PC-9 (cell line): ENCODE measurements at regions of chr10 and their contacts with region 1.

Region 1: DNA sequence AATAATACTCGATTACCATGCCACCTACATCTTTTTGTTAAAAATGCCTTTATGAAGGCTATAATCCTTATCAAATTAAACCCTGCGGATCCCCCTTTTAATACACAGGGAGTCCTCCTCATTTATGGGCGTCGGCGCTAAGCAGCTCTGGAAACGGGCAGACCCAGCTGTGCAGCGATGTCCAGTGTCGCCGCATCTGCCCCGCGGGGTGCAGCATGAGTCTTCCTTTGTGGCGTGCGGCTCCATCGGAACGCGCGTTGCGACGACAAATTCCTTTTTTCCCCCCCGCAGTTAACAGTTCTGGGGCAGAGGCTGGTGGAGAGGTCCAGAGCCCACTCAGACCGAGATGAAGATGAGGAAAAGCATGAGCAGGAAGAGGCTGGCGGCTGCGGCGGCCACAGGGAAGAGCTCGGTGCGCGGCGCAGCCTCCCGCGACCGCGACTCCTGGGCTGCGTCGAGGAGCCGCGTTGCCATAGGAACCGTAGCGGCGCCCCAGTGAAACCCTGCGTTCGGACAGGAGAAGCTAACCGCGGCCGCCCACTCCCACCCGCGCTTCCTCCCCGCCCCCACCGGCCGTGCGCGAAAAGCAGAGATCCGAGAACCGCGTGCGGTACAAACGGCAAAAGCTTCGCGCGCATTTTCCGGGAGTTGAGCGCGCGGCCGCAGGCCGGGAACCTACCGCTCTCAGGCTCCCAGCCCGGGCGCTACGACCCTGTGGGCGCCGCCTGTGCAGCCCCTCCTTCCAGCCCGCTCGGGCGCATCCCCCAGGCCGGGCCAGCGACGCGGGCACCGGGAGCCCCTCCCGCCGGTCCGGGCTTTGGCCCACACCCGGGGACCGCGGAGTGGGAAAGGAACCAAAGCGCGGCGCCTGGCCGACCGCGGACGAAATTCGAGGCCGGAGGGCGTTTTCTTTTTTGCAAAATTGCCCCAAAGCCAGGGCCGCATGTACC is 130.6 kb downstream of the SPAG6 start:
- DNase-seq: no peak
- H3K4me3 ChIP-seq: no peak overlapping the region
- H3K27ac ChIP-seq: no peak overlapping the region
- H3K4me1 ChIP-seq: no peaks in the 10 kb centered on the region
- H3K27me3 ChIP-seq: no peaks in the 10 kb centered on the region
- CTCF ChIP-seq: no peak

Region 2: DNA sequence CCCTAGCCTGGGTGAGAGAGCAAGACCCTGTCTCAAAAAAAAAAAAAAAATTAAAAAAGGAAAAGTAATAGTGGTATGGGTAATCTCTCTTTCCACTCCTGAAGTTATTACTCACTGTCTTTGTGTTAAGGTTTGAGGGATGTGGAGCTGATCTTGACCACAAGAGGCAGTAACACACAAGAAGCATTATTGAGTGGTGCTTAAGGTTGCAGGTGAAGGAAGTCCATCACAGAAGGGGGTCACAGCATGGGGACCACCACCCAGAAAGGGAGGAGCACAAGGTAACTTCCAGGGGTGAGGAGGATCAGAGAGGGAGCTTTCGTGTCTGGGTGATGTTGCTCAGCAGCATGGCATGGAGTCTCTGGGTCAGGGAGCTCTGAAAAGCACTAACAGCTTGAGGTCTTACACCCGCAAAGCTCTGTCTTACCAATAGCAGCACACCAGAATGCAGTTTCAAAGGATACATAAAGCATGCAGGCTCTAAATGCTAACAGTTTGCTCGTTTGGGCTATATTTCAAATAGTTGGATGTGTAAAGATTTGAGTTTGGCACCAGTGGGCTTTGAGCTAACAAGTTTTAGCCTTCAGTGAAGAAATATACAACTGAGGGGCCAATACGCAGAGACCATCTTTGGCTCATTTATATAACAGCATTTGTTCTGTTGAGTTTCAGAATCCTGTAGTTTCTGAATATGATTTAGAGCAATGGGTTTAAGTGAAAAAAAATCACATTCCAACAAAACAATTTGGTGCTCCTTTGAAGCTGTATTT is 372.0 kb before region 1 on chr10:
- CTCF ChIA-PET with region 1: interaction called, 17 read pairs
- POLR2A ChIA-PET with region 1: no interaction called
- intact Hi-C with region 1: no loop called
- DNase-seq: no peak
- H3K4me3 ChIP-seq: no peak overlapping the region
- H3K27ac ChIP-seq: no peak overlapping the region
- H3K4me1 ChIP-seq: no peaks in the 10 kb centered on the region
- H3K27me3 ChIP-seq: no peaks in the 10 kb centered on the region
- CTCF ChIP-seq: peak; percentile 59